ENCODE measurements at regions of chr10 and their contacts with region 1.

Region 1: GRCh38 chr10:28302638-28303488 is at the start of gene MPP7:
- DNase-seq: peak; percentile 92 to 98 (median 96)
- ATAC-seq: peak; percentile 94
- H3K4me3 ChIP-seq: peak within 1 kb of the TSS; percentile 64
- H3K4me3 Mint-ChIP-seq: peak within 1 kb of the TSS; percentile 91
- H3K27ac ChIP-seq: peak within 1 kb of the TSS in 1 of 2 donors; percentile 77
- H3K27ac Mint-ChIP-seq: peak within 1 kb of the TSS; percentile 90
- H3K4me1 ChIP-seq: peaks cover 29% of the 10 kb centered on the region
- H3K4me1 Mint-ChIP-seq: peaks cover 70% of the 10 kb centered on the region
- H3K27me3 ChIP-seq: no peaks in the 10 kb centered on the region
- H3K27me3 Mint-ChIP-seq: no peaks in the 10 kb centered on the region
- CTCF ChIP-seq: peak; percentile 71
- total RNA-seq, gene MPP7: 30.4 to 32.5 TPM

Region 2: GRCh38 chr10:27742195-27743011 is 560.5 kb before region 1 on chr10:
- CTCF ChIA-PET with region 1: no interaction called
- POLR2A ChIA-PET with region 1: interaction called, 6 read pairs
- intact Hi-C with region 1: loop called in 1 of 2 experiments (anchors 2 kb)
- DNase-seq: peak; percentile 58 to 90 (median 70)
- ATAC-seq: peak; percentile 89
- H3K4me3 ChIP-seq: peak overlapping the region; percentile 54
- H3K4me3 Mint-ChIP-seq: peak overlapping the region; percentile 91
- H3K27ac ChIP-seq: no peak overlapping the region
- H3K27ac Mint-ChIP-seq: no peak overlapping the region
- H3K4me1 ChIP-seq: peaks cover 59% of the 10 kb centered on the region
- H3K4me1 Mint-ChIP-seq: peaks cover 47% of the 10 kb centered on the region
- H3K27me3 ChIP-seq: peaks cover 55 to 72% of the 10 kb centered on the region in 2 experiments
- H3K27me3 Mint-ChIP-seq: peaks cover 81% of the 10 kb centered on the region
- CTCF ChIP-seq: peak; percentile 74

Region 3: GRCh38 chr10:28054228-28054837 is 248.5 kb before region 1 on chr10:
- CTCF ChIA-PET with region 1: no interaction called
- POLR2A ChIA-PET with region 1: no interaction called
- intact Hi-C with region 1: no loop called
- DNase-seq: no peak
- ATAC-seq: no peak
- H3K4me3 ChIP-seq: no peak overlapping the region
- H3K4me3 Mint-ChIP-seq: no peak overlapping the region
- H3K27ac ChIP-seq: no peak overlapping the region
- H3K27ac Mint-ChIP-seq: no peak overlapping the region
- H3K4me1 ChIP-seq: no peaks in the 10 kb centered on the region
- H3K4me1 Mint-ChIP-seq: no peaks in the 10 kb centered on the region
- H3K27me3 ChIP-seq: no peaks in the 10 kb centered on the region
- H3K27me3 Mint-ChIP-seq: no peaks in the 10 kb centered on the region
- CTCF ChIP-seq: no peak

Region 4: GRCh38 chr10:28250782-28251181 is 52.1 kb before region 1 on chr10:
- CTCF ChIA-PET with region 1: interaction called, 8 read pairs
- POLR2A ChIA-PET with region 1: interaction called, 11 read pairs
- intact Hi-C with region 1: loop called (anchors 2 to 5 kb)
- DNase-seq: peak in 3 of 14 experiments; percentile 44 to 50 (median 48)
- ATAC-seq: peak; percentile 56
- H3K4me3 ChIP-seq: no peak overlapping the region
- H3K4me3 Mint-ChIP-seq: no peak overlapping the region
- H3K27ac ChIP-seq: no peak overlapping the region
- H3K27ac Mint-ChIP-seq: no peak overlapping the region
- H3K4me1 ChIP-seq: no peaks in the 10 kb centered on the region
- H3K4me1 Mint-ChIP-seq: peaks cover 67% of the 10 kb centered on the region
- H3K27me3 ChIP-seq: no peaks in the 10 kb centered on the region
- H3K27me3 Mint-ChIP-seq: no peaks in the 10 kb centered on the region
- CTCF ChIP-seq: peak; percentile 52

Region 5: DNA sequence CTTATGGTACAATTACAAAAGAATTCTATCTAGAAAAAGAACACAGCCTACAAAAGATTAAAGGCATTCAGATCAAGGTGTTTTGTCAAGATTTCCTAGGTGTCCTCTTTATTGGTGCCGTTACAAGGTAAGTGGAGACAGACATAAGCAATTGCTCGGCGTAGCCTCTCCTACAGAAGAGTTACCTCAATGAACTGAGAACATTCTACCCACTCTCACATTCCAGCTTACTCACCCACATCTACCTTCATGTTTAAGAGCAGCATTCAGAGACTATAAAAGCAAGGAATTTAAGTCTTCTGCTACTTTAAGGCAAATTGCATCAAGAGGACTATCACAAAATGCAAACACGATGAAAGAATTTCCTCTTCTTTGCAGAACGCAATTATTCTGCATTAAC is 29.5 kb before region 1 on chr10:
- CTCF ChIA-PET with region 1: no interaction called
- POLR2A ChIA-PET with region 1: no interaction called
- intact Hi-C with region 1: no loop called
- DNase-seq: no peak
- ATAC-seq: no peak
- H3K4me3 ChIP-seq: no peak overlapping the region
- H3K4me3 Mint-ChIP-seq: no peak overlapping the region
- H3K27ac ChIP-seq: no peak overlapping the region
- H3K27ac Mint-ChIP-seq: no peak overlapping the region
- H3K4me1 ChIP-seq: peaks cover 3% of the 10 kb centered on the region
- H3K4me1 Mint-ChIP-seq: peaks cover 62% of the 10 kb centered on the region
- H3K27me3 ChIP-seq: no peaks in the 10 kb centered on the region
- H3K27me3 Mint-ChIP-seq: no peaks in the 10 kb centered on the region
- CTCF ChIP-seq: no peak

Region 6: DNA sequence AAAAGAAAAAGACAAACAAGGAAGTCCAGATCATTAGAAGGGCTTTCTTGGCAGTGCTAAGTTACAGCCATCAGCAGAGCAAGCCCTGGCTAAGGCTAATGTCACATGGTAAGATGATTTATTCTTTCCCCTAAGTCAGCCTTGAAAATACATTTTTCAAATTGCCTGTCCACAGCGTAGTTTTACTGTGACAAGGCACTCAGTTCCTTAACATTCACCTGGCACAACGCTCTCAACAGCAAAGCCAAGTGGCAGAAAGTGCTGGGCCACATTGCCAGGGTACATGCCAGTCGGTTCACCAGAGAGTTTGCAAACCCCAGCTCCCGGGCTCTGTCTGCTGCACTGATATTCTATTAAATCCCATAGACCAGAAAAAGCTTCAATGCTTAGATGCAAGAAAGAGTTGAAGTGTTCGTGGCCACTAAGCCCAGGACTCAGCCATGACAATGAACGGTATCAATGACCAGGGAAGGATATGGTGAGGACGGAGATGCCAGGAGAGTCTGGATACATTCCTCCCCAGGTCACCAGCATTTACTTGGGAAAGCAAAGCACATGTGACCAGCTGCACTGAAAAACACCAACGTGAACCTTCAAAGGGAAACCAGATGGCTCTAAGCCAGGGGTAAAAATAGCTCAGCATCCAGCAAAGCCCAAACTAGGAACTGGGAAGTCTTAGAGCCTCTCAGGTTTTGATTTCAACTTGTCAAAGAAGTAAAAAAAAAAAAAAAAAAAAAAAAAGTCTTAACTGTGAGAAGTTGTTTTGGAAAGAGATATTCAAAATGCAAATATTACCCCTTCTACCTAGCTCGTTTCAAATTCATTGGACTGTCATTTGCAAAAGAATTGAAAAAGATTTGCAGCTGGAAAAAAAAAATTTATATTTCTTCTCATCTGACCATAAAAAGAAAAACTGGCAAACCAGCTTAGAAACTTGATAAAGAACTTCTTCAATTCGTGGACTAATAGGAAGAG is 23.9 kb after region 1 on chr10:
- CTCF ChIA-PET with region 1: interaction called, 52 read pairs
- POLR2A ChIA-PET with region 1: interaction called, 312 read pairs
- intact Hi-C with region 1: loop called in 1 of 2 experiments (anchors 2 kb)
- DNase-seq: no peak
- ATAC-seq: no peak
- H3K4me3 ChIP-seq: no peak overlapping the region
- H3K4me3 Mint-ChIP-seq: no peak overlapping the region
- H3K27ac ChIP-seq: no peak overlapping the region
- H3K27ac Mint-ChIP-seq: no peak overlapping the region
- H3K4me1 ChIP-seq: peaks cover 39% of the 10 kb centered on the region
- H3K4me1 Mint-ChIP-seq: peaks cover 67% of the 10 kb centered on the region
- H3K27me3 ChIP-seq: no peaks in the 10 kb centered on the region
- H3K27me3 Mint-ChIP-seq: no peaks in the 10 kb centered on the region
- CTCF ChIP-seq: no peak

Region 7: DNA sequence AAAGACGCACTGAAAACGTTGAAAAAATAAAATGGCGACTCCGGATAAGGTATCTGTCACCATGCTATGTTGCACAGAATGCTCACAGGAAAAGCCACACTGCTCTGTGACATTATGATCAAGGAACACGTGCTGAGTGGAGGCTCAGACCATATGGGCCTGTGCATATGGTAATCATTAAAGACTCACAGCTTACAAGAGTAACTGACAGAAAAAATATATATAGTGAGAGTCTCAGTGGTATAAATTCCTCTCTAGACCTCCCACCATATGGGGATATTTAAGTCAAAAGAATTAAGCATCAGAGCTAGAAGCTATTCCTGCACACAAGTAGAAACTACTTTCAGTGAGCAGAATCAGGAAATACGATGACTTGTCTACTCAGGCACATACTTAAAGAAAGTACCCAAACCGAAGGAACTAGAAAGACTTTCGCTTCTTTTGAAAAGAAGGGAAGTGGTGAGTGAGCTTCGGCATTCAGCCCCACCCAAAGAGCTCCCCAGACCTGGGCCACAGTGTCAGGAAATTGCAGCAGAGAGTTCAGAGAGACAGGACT is 65.1 kb after region 1 on chr10:
- CTCF ChIA-PET with region 1: interaction called, 15 read pairs
- POLR2A ChIA-PET with region 1: interaction called, 115 read pairs
- intact Hi-C with region 1: loop called in 1 of 2 experiments (anchors 1 kb)
- DNase-seq: peak; percentile 22 to 92 (median 56)
- ATAC-seq: peak; percentile 92
- H3K4me3 ChIP-seq: peak overlapping the region; percentile 6
- H3K4me3 Mint-ChIP-seq: peak overlapping the region; percentile 80
- H3K27ac ChIP-seq: peak overlapping the region; percentile 69 to 79
- H3K27ac Mint-ChIP-seq: peak overlapping the region; percentile 91
- H3K4me1 ChIP-seq: peaks cover 59% of the 10 kb centered on the region
- H3K4me1 Mint-ChIP-seq: peaks cover 58% of the 10 kb centered on the region
- H3K27me3 ChIP-seq: no peaks in the 10 kb centered on the region
- H3K27me3 Mint-ChIP-seq: no peaks in the 10 kb centered on the region
- CTCF ChIP-seq: no peak

Region 8: GRCh38 chr10:28393966-28394568 is 91.2 kb after region 1 on chr10:
- CTCF ChIA-PET with region 1: interaction called, 13 read pairs
- POLR2A ChIA-PET with region 1: interaction called, 11 read pairs
- intact Hi-C with region 1: no loop called
- DNase-seq: peak; percentile 45 to 85 (median 54)
- ATAC-seq: peak; percentile 80
- H3K4me3 ChIP-seq: no peak overlapping the region
- H3K4me3 Mint-ChIP-seq: no peak overlapping the region
- H3K27ac ChIP-seq: no peak overlapping the region
- H3K27ac Mint-ChIP-seq: no peak overlapping the region
- H3K4me1 ChIP-seq: peaks cover 5% of the 10 kb centered on the region
- H3K4me1 Mint-ChIP-seq: peaks cover 6% of the 10 kb centered on the region
- H3K27me3 ChIP-seq: no peaks in the 10 kb centered on the region
- H3K27me3 Mint-ChIP-seq: peaks cover 6% of the 10 kb centered on the region
- CTCF ChIP-seq: peak; percentile 91